Activated CD4-positive, alpha-beta memory T cell treated with anti-CD3 and anti-CD28 coated beads, Interleukin-2, amount 10 ng/mL, durations not matched to agents 7 days and 5 days (primary cell): ENCODE measurements at regions of chr1 and their contacts with region 1.

Region 1: DNA sequence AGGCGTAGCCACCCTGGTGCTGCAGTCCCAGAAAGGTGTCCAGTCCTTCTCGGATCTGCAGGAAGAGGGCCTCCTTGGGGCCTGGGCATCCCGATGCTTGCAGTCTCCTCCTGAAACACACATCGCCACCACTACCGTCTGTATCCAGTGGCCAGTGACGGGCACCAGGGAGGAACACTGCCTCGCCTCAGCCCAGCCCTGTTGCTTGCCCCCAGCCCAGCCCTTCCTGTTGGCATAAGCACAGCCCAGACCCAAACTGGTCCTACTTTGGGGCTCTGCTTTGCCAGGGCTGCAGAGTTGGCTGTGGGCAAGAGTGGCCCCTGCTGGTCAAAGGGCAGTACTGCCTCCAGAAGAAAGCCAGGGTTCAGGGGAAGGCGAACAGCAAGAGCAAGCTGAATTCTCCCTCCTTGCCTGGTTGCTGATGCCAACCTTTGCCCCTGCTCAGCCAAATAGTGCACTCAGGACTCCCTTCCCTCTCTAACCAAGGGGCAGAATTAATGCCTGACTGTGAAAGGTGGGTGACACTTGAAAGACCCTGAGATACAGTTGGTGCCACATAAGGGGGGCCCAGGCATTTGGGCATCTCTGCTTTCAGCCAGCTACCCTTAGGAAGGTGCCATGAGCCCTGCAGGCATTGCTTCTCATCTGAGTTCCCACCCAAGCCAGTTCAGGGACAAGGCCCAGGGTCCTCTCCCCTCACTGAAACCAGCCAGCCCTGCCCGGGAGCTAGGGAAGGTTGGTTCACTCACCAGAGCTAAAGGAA is 11.1 kb upstream of the ARHGEF2 start:
- DNase-seq: peak; percentile 85
- H3K4me3 Mint-ChIP-seq: no peak overlapping the region
- H3K27ac Mint-ChIP-seq: no peak overlapping the region
- H3K4me1 Mint-ChIP-seq: peaks cover 23% of the 10 kb centered on the region
- H3K27me3 Mint-ChIP-seq: no peaks in the 10 kb centered on the region

Region 2: DNA sequence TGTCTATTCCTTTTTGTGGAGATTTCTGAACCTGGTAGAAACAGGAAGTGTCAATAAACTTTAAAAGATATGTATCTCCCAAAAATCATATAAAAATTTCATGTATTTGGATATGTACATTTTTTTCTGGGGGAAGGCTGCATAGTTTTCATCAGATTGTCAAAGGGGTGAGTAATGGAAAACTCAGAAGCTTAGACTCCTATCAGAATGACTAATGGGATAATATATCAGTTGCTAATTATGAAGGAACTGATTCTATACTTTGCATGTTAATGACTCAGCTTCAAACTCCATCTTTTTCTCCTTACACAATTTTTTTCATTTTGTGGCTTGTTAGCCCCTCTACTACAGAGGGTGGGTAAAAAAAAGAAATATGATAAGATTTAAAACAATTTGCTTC is 188.3 kb before region 1 on chr1:
- CTCF ChIA-PET with region 1: no interaction called
- POLR2A ChIA-PET with region 1: no interaction called
- DNase-seq: no peak
- H3K4me3 Mint-ChIP-seq: no peak overlapping the region
- H3K27ac Mint-ChIP-seq: no peak overlapping the region
- H3K4me1 Mint-ChIP-seq: no peaks in the 10 kb centered on the region
- H3K27me3 Mint-ChIP-seq: no peaks in the 10 kb centered on the region

Region 3: DNA sequence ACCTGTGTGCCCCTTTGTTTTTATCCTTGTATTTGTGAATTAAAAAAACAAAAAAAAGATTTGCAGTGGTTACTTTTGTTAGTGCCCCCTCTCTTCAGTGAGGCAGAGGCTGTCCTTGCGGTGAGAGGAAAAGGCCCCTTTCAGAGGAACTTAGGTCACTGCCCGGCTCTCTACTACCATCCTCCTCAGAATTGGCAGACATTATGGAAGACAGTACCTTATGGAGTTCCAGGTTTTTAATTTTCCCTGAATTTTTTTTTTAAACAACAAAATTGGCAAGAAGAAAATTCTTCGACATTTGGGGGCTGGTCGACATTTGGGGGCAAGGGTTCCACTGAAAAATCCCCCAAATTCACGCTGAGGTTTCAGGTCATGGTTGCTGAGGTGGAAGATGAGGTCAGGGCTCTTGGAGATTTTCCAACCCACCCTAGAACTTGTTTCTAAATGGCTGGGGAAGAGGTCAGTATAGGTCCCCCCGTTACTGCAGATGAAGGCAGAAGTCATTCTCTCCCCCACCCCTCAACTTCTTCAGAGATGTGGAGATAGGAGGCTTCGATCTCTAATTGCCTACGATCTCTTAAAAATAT is 42.7 kb before region 1 on chr1:
- CTCF ChIA-PET with region 1: interaction called, 10 read pairs
- POLR2A ChIA-PET with region 1: interaction called, 7 read pairs
- DNase-seq: no peak
- H3K4me3 Mint-ChIP-seq: no peak overlapping the region
- H3K27ac Mint-ChIP-seq: peak overlapping the region; percentile 76
- H3K4me1 Mint-ChIP-seq: peaks cover 48% of the 10 kb centered on the region
- H3K27me3 Mint-ChIP-seq: no peaks in the 10 kb centered on the region

Region 4: DNA sequence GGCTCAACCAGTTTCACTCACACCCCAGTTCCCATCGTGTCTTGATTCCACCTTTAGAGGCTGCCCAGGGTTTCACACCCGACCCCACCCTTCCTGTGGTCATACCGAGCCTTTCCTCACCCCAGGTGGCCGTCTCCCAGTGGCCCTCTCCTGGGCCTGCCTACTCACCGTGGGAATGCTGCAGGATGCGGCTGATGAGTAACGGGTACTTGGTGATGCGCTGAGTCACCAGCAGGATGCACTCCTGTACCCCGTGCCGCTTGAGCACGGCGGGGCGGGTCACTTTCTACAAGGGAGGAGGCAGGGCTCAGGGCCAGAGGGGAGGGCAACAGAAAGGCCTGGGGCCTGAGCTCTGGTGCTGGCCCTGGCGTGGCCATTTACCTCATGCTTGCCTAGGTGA is 27.5 kb before region 1 on chr1:
- CTCF ChIA-PET with region 1: interaction called, 15 read pairs
- POLR2A ChIA-PET with region 1: interaction called, 5 read pairs
- DNase-seq: peak; percentile 62
- H3K4me3 Mint-ChIP-seq: no peak overlapping the region
- H3K27ac Mint-ChIP-seq: peak overlapping the region; percentile 89
- H3K4me1 Mint-ChIP-seq: peaks cover 54% of the 10 kb centered on the region
- H3K27me3 Mint-ChIP-seq: no peaks in the 10 kb centered on the region

Region 5: GRCh38 chr1:155967341-155968050 is 21.9 kb before region 1 on chr1:
- CTCF ChIA-PET with region 1: interaction called, 15 read pairs
- POLR2A ChIA-PET with region 1: interaction called, 5 read pairs
- DNase-seq: no peak
- H3K4me3 Mint-ChIP-seq: peak overlapping the region; percentile 24
- H3K27ac Mint-ChIP-seq: peak overlapping the region; percentile 87
- H3K4me1 Mint-ChIP-seq: peaks cover 82% of the 10 kb centered on the region
- H3K27me3 Mint-ChIP-seq: no peaks in the 10 kb centered on the region

Region 6: DNA sequence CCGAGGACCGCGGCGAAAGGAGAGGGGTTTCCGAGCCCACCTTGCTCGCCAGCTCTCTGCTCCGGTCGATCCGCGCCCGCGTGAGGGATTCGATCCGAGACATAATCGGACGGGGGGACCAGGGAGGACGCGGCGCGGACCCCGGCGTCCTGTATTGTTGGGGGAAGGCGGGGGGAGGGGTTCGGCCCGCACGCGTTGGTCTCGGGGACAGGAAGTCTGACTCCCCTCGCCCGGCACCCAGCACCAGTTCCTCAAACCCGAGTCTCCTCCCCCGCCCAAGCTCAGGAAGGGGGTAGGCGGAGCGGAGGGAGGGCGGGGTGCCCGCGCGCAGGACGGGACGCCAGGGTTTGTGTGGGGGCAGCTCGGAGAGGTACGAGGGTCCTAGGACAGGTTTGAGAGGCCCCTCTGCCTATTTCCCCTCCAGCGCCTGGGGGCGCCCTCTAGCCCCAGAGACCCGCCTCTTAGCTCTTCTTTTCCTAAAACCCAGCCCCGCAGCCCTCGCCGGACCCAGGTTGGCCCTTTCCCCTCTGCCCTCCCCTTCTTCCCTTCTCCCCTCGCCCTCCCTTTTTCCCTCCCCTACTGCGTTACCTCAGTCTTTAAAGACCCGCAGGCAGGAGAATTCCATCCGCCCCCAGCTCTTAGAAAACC is 11.0 kb before region 1 on chr1 and contains the start of gene ARHGEF2:
- CTCF ChIA-PET with region 1: interaction called, 80 read pairs
- POLR2A ChIA-PET with region 1: interaction called, 8 read pairs
- DNase-seq: peak; percentile 84
- H3K4me3 Mint-ChIP-seq: peak within 1 kb of the TSS; percentile 100
- H3K27ac Mint-ChIP-seq: peak within 1 kb of the TSS; percentile 93
- H3K4me1 Mint-ChIP-seq: peaks cover 60% of the 10 kb centered on the region
- H3K27me3 Mint-ChIP-seq: no peaks in the 10 kb centered on the region
- total RNA-seq, gene ARHGEF2: 159 to 164 TPM

Region 7: GRCh38 chr1:156021954-156022353 is 32.5 kb after region 1 on chr1:
- CTCF ChIA-PET with region 1: no interaction called
- POLR2A ChIA-PET with region 1: no interaction called
- DNase-seq: no peak
- H3K4me3 Mint-ChIP-seq: no peak overlapping the region
- H3K27ac Mint-ChIP-seq: peak overlapping the region; percentile 13
- H3K4me1 Mint-ChIP-seq: peaks cover 40% of the 10 kb centered on the region
- H3K27me3 Mint-ChIP-seq: peaks cover 4% of the 10 kb centered on the region

Region 8: DNA sequence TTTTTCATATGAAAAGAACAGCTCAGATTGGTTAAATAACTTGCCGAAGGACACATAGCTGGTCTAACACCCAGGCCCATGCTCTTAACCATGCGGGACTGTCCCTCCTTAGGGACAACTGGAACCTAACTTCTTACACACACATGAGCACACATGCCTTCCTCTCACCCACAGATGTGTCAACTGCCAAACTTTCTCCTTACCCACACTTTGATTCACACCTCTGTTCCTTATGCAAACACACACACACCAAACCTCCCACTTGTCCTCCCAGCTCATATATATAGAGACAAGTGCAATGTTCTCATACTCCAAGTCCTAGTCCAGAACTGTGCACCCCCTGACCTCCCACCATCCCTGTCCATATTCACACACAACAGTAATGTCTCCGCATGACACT is 75.8 kb after region 1 on chr1:
- CTCF ChIA-PET with region 1: interaction called, 14 read pairs
- POLR2A ChIA-PET with region 1: interaction called, 3 read pairs
- DNase-seq: no peak
- H3K4me3 Mint-ChIP-seq: no peak overlapping the region
- H3K27ac Mint-ChIP-seq: no peak overlapping the region
- H3K4me1 Mint-ChIP-seq: peaks cover 18% of the 10 kb centered on the region
- H3K27me3 Mint-ChIP-seq: no peaks in the 10 kb centered on the region